Naive thymus-derived CD4-positive, alpha-beta T cell (primary cell): ENCODE measurements at regions of chr11 and their contacts with region 1.

Region 1: DNA sequence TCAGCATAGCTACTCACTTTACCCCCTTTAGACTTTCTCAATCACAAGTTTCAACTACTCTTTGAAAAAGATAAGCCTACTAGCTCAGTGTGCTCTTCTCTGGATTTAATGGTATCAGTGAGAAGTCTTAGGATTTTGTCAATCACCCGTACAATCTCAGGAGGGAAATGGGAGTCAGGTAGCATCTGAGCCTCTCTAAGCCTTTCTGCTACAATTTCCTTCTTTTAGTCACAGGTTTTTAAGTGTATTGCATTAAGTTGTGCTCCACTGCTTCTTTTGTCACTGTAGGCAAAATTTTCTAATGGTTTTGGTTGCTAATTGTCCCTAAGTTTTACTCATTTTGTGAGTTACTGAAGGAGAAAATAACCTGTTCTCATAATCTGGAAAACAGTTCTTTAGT is 758.5 kb upstream of the CCDC90B start:
- DNase-seq: no peak
- ATAC-seq: no peak
- H3K4me3 ChIP-seq: no peak overlapping the region
- H3K4me3 Mint-ChIP-seq: no peak overlapping the region
- H3K27ac ChIP-seq: no peak overlapping the region
- H3K27ac Mint-ChIP-seq: no peak overlapping the region
- H3K4me1 ChIP-seq: no peaks in the 10 kb centered on the region
- H3K4me1 Mint-ChIP-seq: no peaks in the 10 kb centered on the region
- H3K27me3 ChIP-seq: no peaks in the 10 kb centered on the region
- H3K27me3 Mint-ChIP-seq: no peaks in the 10 kb centered on the region

Region 2: DNA sequence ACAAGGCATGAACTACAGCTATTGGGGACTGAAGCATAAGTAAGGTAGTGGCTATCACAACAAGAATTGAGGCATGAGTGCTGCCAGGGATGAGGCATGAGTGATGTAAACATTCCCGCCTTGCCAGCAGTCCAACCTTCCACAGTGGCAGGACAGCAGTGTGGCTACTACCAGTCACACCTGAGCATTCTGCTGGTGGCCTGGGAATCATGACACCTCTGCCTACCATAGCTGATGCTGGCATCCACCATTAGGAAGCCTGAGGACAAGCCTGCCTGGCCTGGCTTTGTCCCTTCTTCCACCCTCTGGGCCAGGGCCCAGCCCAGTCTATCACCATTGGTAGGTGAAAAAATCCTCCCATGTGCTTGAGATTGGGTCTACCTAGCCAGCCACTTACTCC is 45.8 kb before region 1 on chr11:
- CTCF ChIA-PET with region 1: no interaction called
- POLR2A ChIA-PET with region 1: no interaction called
- intact Hi-C with region 1: no loop called
- DNase-seq: no peak
- ATAC-seq: no peak
- H3K4me3 ChIP-seq: no peak overlapping the region
- H3K4me3 Mint-ChIP-seq: no peak overlapping the region
- H3K27ac ChIP-seq: no peak overlapping the region
- H3K27ac Mint-ChIP-seq: no peak overlapping the region
- H3K4me1 ChIP-seq: no peaks in the 10 kb centered on the region
- H3K4me1 Mint-ChIP-seq: no peaks in the 10 kb centered on the region
- H3K27me3 ChIP-seq: no peaks in the 10 kb centered on the region
- H3K27me3 Mint-ChIP-seq: no peaks in the 10 kb centered on the region

Region 3: GRCh38 chr11:84103096-84103495 is 58.4 kb after region 1 on chr11:
- CTCF ChIA-PET with region 1: no interaction called
- POLR2A ChIA-PET with region 1: no interaction called
- intact Hi-C with region 1: loop called in 1 of 2 experiments (anchors 10 kb)
- DNase-seq: no peak
- ATAC-seq: no peak
- H3K4me3 ChIP-seq: no peak overlapping the region
- H3K4me3 Mint-ChIP-seq: no peak overlapping the region
- H3K27ac ChIP-seq: no peak overlapping the region
- H3K27ac Mint-ChIP-seq: no peak overlapping the region
- H3K4me1 ChIP-seq: no peaks in the 10 kb centered on the region
- H3K4me1 Mint-ChIP-seq: no peaks in the 10 kb centered on the region
- H3K27me3 ChIP-seq: no peaks in the 10 kb centered on the region
- H3K27me3 Mint-ChIP-seq: no peaks in the 10 kb centered on the region